BJ (cell line): ENCODE measurements at regions of chr14 and their contacts with region 1.

Region 1: GRCh38 chr14:30521899-30522736 is 36.8 kb upstream of the G2E3 start:
- DNase-seq: no peak
- H3K4me3 ChIP-seq: no peak overlapping the region
- H3K27me3 ChIP-seq: no peaks in the 10 kb centered on the region
- CTCF ChIP-seq: peak; percentile 77

Region 2: GRCh38 chr14:30375296-30375892 is 146.7 kb before region 1 on chr14:
- CTCF ChIA-PET with region 1: interaction called, 47 read pairs
- POLR2A ChIA-PET with region 1: no interaction called
- DNase-seq: no peak
- H3K4me3 ChIP-seq: no peak overlapping the region
- H3K27me3 ChIP-seq: no peaks in the 10 kb centered on the region; the same call in 1 of the 2 replicates
- CTCF ChIP-seq: peak; percentile 92

Region 3: GRCh38 chr14:30507209-30507608 is 14.9 kb before region 1 on chr14:
- CTCF ChIA-PET with region 1: interaction called, 19 read pairs
- POLR2A ChIA-PET with region 1: no interaction called
- DNase-seq: no peak
- H3K4me3 ChIP-seq: no peak overlapping the region
- H3K27me3 ChIP-seq: no peaks in the 10 kb centered on the region
- CTCF ChIP-seq: no peak

Region 4: DNA sequence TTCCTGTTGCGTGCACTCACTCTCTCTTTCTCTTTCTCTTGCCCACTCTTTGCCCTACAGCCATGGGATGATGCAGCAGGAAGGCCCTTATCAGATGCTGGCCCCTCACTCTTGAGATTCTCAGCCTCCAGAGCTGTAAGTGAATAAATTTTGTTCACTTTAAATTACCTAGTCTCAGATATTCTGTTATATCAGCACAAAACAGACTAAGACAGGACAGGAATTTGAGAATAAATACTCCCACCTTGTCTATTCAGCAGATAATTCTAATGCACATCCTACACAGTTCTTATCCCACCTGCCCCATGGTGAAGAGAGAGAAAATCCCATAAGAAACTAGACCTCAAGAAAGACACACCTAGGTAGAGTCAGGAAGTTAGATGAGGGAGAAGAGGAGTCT is 11.0 kb after region 1 on chr14:
- CTCF ChIA-PET with region 1: interaction called, 19 read pairs
- POLR2A ChIA-PET with region 1: no interaction called
- DNase-seq: no peak
- H3K4me3 ChIP-seq: no peak overlapping the region
- H3K27me3 ChIP-seq: peaks cover 2% of the 10 kb centered on the region; the same call in 1 of the 2 replicates
- CTCF ChIP-seq: no peak

Region 5: DNA sequence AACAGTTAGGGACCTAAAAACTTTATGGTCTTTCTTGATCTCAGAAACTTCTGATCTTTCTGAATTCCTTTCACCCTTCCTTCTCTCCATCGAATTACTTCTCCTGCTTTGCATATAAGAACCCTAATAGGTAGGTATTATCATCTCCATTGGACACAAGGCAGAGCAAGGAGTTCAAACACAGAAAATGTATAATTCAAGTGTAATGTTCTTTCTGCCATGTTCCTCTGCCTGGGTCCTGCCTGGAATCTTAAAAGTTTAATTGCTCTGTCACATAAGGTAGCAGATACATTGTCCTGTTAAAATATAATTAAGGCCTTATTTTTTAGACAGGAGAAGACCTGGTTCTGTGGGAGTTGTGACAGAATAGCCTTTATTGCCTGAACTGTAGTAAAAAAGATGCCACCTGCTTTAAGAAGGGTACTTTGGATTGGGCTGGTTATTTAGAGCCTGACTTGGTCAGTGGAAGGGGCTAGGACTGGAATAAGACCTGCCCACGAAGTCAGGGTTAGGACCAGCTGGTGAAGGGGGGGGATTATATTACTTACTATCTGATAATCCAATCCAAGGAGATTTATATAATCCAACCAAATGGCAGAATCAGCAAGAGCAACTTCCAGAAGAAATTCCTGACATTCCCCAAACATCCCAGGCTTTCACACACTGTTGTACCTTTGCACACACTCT is 47.2 kb after region 1 on chr14:
- CTCF ChIA-PET with region 1: no interaction called
- POLR2A ChIA-PET with region 1: no interaction called
- DNase-seq: no peak
- H3K4me3 ChIP-seq: no peak overlapping the region
- H3K27me3 ChIP-seq: no peaks in the 10 kb centered on the region
- CTCF ChIP-seq: no peak